ENCODE measurements at regions of chr19 and their contacts with region 1.

Region 1: GRCh38 chr19:32224371-32225244 is 120.8 kb upstream of the ZNF507 start:
- DNase-seq: peak; percentile 6
- H3K4me3 ChIP-seq: no peak overlapping the region
- H3K27ac ChIP-seq: no peak overlapping the region
- H3K4me1 ChIP-seq: no peaks in the 10 kb centered on the region
- CTCF ChIP-seq: peak; percentile 96

Region 2: GRCh38 chr19:30682999-30683536 is 1541.5 kb before region 1 on chr19:
- CTCF ChIA-PET with region 1: no interaction called
- POLR2A ChIA-PET with region 1: no interaction called
- intact Hi-C with region 1: loop called (anchors 10 kb)
- DNase-seq: peak; percentile 53
- H3K4me3 ChIP-seq: no peak overlapping the region
- H3K27ac ChIP-seq: no peak overlapping the region
- H3K4me1 ChIP-seq: no peaks in the 10 kb centered on the region
- CTCF ChIP-seq: peak; percentile 95

Region 3: DNA sequence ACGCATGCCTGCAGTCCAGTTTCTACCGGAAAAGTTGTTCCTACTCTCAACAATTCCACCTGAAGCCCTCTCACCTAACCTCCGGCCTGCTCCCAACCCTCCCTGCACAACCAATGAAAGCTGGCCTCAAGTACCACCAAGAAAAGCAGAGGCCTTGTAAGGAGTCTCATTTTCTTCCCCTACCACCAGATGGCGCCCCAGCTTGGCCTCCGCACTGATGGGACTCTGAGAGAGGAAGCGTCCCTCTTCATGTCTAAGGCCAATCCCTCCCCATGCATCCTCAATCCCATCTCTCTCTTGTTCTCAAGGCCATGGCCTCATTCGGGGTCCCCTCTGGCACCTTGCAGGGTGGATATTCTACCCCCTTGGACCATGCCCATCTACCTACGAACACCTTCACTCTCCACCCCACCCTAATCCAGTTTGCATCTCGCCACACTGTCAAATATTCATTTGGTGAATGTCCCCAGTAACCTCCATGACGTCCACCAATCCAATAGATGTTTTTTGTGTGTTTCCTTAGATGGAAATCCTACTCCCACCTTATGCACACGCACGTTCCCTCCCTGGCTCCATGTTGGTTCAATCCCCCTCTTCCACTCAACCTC is 1439.7 kb before region 1 on chr19:
- CTCF ChIA-PET with region 1: no interaction called
- POLR2A ChIA-PET with region 1: no interaction called
- intact Hi-C with region 1: loop called (anchors 2 kb)
- DNase-seq: peak; percentile 43
- H3K4me3 ChIP-seq: no peak overlapping the region
- H3K27ac ChIP-seq: no peak overlapping the region
- H3K4me1 ChIP-seq: no peaks in the 10 kb centered on the region
- CTCF ChIP-seq: peak; percentile 86

Region 4: GRCh38 chr19:31676271-31677004 is 548.2 kb before region 1 on chr19:
- CTCF ChIA-PET with region 1: no interaction called
- POLR2A ChIA-PET with region 1: no interaction called
- intact Hi-C with region 1: loop called (anchors 10 kb)
- DNase-seq: peak; percentile 3
- H3K4me3 ChIP-seq: no peak overlapping the region
- H3K27ac ChIP-seq: no peak overlapping the region
- H3K4me1 ChIP-seq: no peaks in the 10 kb centered on the region
- CTCF ChIP-seq: peak; percentile 47